ENCODE measurements at regions of chr20 and their contacts with region 1.

Region 1: GRCh38 chr20:31723319-31724078 is 831 bp upstream of the BCL2L1 start:
- DNase-seq: peak; percentile 97
- ATAC-seq: peak; percentile 84

Region 2: DNA sequence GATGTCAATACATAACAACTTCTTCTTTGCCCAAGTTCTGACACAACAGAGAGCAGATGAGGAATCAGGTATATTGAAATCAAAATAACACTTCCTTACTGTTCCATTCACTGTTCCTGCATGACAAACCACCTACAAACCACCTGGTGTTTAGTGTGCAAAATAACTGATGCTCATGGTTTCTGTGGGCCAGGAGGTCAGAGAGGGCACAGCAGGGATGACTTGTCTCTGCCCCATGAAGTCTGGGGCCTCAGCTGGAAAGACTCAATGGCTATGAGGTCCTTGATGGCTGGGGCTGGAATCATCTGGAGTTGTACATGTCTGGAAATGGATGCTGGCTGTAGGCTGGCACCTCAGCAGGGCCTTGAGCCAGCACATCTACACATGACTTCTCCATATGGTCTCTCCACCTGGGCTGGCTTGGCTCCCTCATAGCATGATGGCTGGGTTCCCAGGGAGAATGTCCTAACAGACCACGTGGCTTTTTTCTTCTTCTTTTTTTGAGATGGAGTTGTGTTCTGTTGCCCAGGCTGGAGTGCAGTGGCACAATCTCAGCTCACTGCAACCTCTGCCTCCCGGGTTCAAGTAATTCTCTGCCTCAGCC is 93.2 kb before region 1 on chr20:
- intact Hi-C with region 1: no loop called
- DNase-seq: no peak
- ATAC-seq: no peak

Region 3: GRCh38 chr20:31661625-31662371 is 61.7 kb before region 1 on chr20:
- intact Hi-C with region 1: loop called (anchors 5 to 10 kb)
- DNase-seq: peak; percentile 73 to 93
- ATAC-seq: peak; percentile 61